AG04450 (cell line): ENCODE measurements at regions of chr19 and their contacts with region 1.

Region 1: GRCh38 chr19:15488489-15489224 is 9.4 kb upstream of the PGLYRP2 start:
- DNase-seq: no peak
- H3K4me3 ChIP-seq: no peak overlapping the region
- H3K27ac ChIP-seq: no peak overlapping the region
- H3K27me3 ChIP-seq: no peaks in the 10 kb centered on the region
- CTCF ChIP-seq: no peak

Region 2: DNA sequence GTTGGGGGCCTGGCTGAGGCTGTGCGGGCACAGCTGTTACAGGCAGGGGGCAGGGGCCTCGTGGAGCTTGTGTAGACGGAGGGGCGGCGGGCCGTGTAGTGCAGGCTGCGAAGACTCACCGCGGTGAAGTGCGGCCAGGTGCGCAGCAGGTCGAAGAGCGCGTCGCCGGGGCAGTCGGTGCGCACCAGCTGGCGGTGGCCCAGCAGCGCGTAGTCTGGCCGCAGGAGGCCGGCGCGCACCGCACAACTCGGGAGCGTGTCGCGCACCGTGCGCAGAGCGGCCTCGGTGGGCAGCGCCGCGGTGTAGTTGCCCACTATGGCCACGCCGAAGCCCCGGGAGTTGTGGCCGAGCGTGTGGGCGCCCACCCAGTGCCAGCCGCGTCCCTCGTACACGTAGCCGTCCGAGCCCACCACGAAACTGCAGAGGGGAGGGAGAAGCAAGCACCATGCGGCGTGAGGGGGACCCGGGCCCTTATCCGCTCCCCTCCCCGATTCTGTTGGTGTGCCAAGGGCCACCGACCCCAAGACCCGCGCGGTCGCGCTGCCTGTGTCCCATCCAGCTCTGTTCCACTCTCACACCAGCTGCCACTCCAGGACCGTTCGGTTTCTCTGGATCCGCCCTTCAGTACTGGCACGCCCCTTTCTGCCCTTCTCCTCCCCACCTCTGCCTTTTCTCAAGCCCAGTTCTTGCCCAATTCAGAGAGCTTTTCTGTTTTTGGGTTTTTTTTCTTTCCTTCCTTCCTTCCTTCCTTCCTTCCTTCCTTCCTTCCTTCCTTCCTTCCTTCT is 19.0 kb before region 1 on chr19:
- CTCF ChIA-PET with region 1: no interaction called
- POLR2A ChIA-PET with region 1: interaction called, 10 read pairs
- DNase-seq: no peak
- H3K4me3 ChIP-seq: peak overlapping the region; percentile 29
- H3K27ac ChIP-seq: no peak overlapping the region
- H3K27me3 ChIP-seq: peaks cover 14% of the 10 kb centered on the region
- CTCF ChIP-seq: no peak